Endothelial cell of umbilical vein (primary cell): ENCODE measurements at regions of chr1 and their contacts with region 1.

Region 1: GRCh38 chr1:40143891-40144575 is 17.2 kb upstream of the RLF start:
- DNase-seq: peak; percentile 67
- H3K4me3 ChIP-seq: no peak overlapping the region
- H3K27ac ChIP-seq: no peak overlapping the region
- H3K4me1 ChIP-seq: no peaks in the 10 kb centered on the region
- H3K27me3 ChIP-seq: peaks cover 22 to 37% of the 10 kb centered on the region in 2 experiments
- CTCF ChIP-seq: peak; percentile 74 to 76
- POLR2A ChIP-seq: no peak

Region 2: GRCh38 chr1:40132383-40133311 is 11.4 kb before region 1 on chr1:
- CTCF ChIA-PET with region 1: interaction called, 38 read pairs
- POLR2A ChIA-PET with region 1: no interaction called
- dilution Hi-C with region 1: no loop called
- intact Hi-C with region 1: no loop called
- DNase-seq: peak; percentile 33
- H3K4me3 ChIP-seq: peak overlapping the region in 2 of 3 experiments; percentile 32 to 35
- H3K27ac ChIP-seq: no peak overlapping the region
- H3K4me1 ChIP-seq: peaks cover 13% of the 10 kb centered on the region
- H3K27me3 ChIP-seq: peaks cover 13 to 25% of the 10 kb centered on the region in 2 experiments
- CTCF ChIP-seq: no peak
- POLR2A ChIP-seq: no peak

Region 3: DNA sequence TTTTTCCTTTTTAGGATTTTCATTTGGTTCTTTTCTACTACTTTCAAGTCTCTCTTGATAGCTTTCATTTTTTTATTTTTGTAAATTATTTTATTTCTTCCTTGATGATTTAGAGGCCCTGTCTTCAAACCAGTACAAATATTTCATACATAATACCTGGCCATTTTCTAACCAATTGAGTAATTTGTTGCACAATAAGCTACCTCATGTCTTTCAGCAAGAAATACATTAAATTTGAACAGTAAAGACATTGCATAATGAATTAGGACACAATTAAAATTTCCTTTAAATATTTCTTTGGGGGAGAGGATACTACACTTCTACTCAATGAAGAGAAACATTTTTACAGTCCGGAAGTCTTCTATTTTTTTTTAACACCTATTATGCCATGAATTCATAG is 188.7 kb after region 1 on chr1:
- CTCF ChIA-PET with region 1: interaction called, 362 read pairs
- POLR2A ChIA-PET with region 1: interaction called, 3 read pairs
- dilution Hi-C with region 1: no loop called
- intact Hi-C with region 1: no loop called
- DNase-seq: no peak
- H3K4me3 ChIP-seq: no peak overlapping the region
- H3K27ac ChIP-seq: no peak overlapping the region
- H3K4me1 ChIP-seq: no peaks in the 10 kb centered on the region
- H3K27me3 ChIP-seq: peaks cover 0 to 6% of the 10 kb centered on the region in 2 experiments
- CTCF ChIP-seq: no peak
- POLR2A ChIP-seq: no peak

Region 4: DNA sequence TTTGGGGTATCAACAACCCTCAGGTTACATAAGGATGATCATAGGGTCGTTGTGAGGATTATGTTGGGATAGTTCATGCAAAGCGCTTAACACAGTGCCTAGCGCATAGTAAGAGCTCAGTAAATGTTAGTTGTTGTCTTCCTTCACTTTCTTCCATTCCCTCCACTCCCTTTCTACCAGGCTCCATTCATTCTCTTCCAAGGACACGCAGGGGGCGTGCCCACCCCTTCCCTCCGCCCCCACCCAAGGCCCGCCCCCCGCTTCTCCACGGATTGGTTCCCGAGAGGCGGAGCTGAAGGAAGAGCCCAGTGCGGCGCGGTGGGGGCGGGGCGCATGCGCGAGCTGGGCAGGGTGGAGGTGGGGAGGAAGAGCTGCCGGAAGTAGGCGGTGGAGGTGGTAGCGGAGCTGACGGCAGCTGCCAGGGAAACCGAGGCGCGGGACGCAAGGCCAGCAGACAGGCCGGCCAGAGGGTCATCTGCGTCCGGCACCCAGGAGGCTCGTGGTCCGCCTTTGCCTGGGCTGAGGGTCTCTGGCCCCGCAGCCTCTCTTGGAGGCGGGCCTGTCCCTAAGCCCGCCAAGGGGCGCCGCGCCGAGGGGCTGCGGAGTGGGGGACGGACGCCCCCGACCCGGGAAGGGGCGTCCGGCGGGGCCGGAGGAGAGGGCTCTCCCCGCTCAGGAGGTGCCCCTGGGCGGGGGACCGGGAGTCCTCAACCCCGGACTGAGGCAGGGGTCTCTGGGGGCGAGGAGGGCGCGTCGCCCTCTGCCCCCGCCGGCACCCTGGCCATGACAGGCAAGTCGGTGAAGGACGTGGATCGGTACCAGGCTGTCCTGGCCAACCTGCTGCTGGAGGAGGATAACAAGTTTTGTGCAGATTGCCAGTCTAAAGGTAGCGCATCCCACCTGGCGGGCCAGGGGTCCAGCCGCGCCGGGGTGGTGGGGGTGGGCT is 229.6 kb after region 1 on chr1 and contains the start of gene SMAP2:
- CTCF ChIA-PET with region 1: interaction called, 13 read pairs
- POLR2A ChIA-PET with region 1: no interaction called
- dilution Hi-C with region 1: no loop called
- intact Hi-C with region 1: no loop called
- DNase-seq: peak; percentile 96
- H3K4me3 ChIP-seq: peak within 1 kb of the TSS; percentile 69 to 90 (median 89)
- H3K27ac ChIP-seq: no peak within 1 kb of the TSS
- H3K4me1 ChIP-seq: peaks cover 7% of the 10 kb centered on the region
- H3K27me3 ChIP-seq: peaks cover 0 to 4% of the 10 kb centered on the region in 2 experiments
- CTCF ChIP-seq: no peak
- POLR2A ChIP-seq: no peak
- total RNA-seq, gene SMAP2: 11.1 and 12.0 TPM in 2 replicates

Region 5: DNA sequence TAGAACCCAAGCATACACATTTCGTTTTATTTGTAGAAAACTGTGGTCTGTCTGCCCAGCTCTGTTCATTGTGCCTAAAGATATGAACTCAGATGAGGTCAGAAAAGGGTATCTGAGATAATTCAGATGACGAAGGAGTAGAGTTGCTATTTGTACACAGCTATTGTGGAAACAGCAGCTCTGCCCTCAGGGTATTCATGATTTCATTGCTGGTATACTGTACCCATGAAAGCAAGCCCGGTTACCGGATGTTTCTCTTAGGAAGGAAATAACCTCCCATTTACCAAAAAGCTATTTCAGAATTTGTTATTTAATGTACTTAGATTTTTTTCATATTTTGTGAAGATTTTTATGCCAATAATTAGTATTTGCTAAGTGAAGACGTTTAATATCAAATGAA is 267.3 kb after region 1 on chr1:
- CTCF ChIA-PET with region 1: interaction called, 173 read pairs
- POLR2A ChIA-PET with region 1: no interaction called
- dilution Hi-C with region 1: no loop called
- intact Hi-C with region 1: no loop called
- DNase-seq: no peak
- H3K4me3 ChIP-seq: no peak overlapping the region
- H3K27ac ChIP-seq: no peak overlapping the region
- H3K4me1 ChIP-seq: no peaks in the 10 kb centered on the region
- H3K27me3 ChIP-seq: no peaks in the 10 kb centered on the region
- CTCF ChIP-seq: no peak
- POLR2A ChIP-seq: no peak